HEK293 (cell line): ENCODE measurements at regions of chr12 and their contacts with region 1.

Region 1: GRCh38 chr12:108803428-108804105 is 53.8 kb downstream of the SSH1 start:
- H3K4me3 ChIP-seq: no peak overlapping the region
- H3K27ac ChIP-seq: no peak overlapping the region
- H3K4me1 ChIP-seq: no peaks in the 10 kb centered on the region
- CTCF ChIP-seq: peak; percentile 61

Region 2: DNA sequence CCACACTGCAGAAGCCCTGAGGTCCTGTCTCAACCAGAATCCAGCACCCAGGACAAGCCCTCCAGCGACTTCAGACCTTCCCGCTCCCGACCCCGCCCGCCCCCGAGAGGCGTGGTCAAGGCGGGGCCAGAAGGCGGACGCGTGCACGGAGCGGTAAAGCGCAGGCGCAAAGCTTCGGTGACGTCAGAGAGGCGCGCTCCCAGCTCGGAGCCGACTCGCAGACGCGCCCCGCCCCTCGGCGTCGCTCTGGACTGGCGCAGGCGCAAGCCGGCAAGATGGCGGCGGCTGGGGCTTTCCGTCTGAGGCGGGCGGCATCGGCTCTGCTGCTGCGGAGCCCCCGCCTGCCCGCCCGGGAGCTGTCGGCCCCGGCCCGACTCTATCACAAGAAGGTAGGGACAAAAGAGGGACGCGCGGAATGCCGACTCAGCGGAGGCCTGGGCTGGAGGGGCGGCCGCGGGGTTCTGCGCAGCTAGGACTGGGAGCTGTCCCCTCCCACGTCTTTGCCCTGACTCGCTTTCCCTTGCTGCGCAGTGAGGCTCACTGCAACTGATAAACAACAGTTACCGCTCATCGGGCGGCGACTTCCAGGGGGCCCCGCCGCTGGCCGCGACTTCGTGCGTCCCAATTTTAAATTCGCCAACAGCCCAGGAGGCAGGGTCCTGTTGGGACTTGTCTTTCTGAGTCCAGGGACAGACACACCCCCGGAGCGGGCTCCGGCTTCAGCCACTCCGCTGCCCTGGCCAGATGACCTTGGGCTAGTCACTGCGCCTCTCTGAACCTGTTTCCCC is 241.0 kb before region 1 on chr12 and contains the start of gene ISCU:
- CTCF ChIA-PET with region 1: interaction called, 20 read pairs
- POLR2A ChIA-PET with region 1: no interaction called
- H3K4me3 ChIP-seq: peak within 1 kb of the TSS; percentile 97
- H3K27ac ChIP-seq: peak within 1 kb of the TSS; percentile 77
- H3K4me1 ChIP-seq: 0 out of 2 replicates have a peak, but pooled peaks cover 2% of the 10 kb centered on the region
- CTCF ChIP-seq: no peak

Region 3: DNA sequence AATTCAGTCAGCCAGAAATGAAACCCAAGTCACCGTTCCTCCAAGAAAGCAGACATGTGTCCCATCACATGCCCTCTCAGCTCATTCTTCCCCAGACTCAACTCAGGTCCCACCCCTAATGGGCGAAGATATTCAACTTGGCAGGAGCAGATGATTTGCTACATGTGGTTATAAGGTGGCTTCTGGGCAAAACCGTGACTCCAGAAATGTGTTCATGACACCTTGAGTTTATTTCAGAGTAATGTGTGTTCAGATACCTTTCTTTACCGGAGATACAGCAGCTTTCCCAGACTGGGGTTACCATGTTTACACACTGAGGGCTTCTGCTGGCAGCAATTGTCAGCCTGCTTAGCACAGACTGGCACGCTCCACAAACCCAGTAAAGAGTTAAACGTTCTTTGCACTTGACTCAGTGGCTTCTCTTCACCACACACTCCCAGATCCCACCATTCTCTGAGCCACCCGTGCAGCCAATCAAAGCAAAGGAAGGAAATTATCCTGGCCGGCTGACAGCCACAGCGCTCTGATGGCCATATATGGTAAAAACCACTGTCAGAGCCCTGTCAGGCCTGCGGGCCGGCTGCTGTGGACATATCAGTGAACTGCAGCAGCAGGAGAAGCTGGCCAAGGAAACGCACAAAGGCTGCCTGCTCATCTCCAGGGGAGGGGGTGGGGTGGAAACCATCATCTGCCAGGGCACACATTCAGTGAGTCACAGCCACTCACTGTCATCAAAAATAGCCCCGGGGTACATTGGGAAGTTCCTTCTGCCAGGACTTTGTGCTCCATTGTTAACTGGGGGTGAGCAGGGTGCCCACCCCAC is 112.2 kb before region 1 on chr12:
- CTCF ChIA-PET with region 1: no interaction called
- POLR2A ChIA-PET with region 1: no interaction called
- H3K4me3 ChIP-seq: peak overlapping the region; percentile 12; the same call in 1 of the 2 replicates
- H3K27ac ChIP-seq: peak overlapping the region; percentile 78
- H3K4me1 ChIP-seq: peaks cover 30% of the 10 kb centered on the region
- CTCF ChIP-seq: peak; percentile 50; the same call in 1 of the 2 replicates

Region 4: GRCh38 chr12:108821407-108822397 is 18.1 kb after region 1 on chr12:
- CTCF ChIA-PET with region 1: interaction called, 11 read pairs
- POLR2A ChIA-PET with region 1: no interaction called
- H3K4me3 ChIP-seq: no peak overlapping the region
- H3K27ac ChIP-seq: no peak overlapping the region
- H3K4me1 ChIP-seq: peaks cover 18% of the 10 kb centered on the region
- CTCF ChIP-seq: no peak

Region 5: DNA sequence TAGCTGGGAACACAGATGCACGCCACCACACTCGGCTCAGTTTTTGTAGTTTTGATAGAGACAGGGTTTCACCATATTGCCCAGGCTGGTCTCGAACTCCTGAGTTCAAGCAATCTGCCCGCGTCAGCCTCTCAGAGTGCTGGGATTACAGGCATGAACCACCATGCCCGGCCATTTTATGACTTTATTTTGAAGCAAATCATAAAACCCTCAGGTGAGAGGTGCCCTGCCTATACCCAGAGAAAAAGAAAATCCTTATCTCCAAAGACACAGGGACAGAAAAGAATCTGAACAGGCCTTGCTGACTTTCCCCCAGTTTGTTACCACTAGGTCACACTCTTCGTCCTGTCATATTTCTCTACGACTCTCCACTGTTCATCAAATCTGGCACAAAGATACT is 125.1 kb after region 1 on chr12:
- CTCF ChIA-PET with region 1: no interaction called
- POLR2A ChIA-PET with region 1: no interaction called
- H3K4me3 ChIP-seq: no peak overlapping the region
- H3K27ac ChIP-seq: no peak overlapping the region
- H3K4me1 ChIP-seq: no peaks in the 10 kb centered on the region
- CTCF ChIP-seq: no peak

Region 6: GRCh38 chr12:109010259-109010658 is 206.7 kb after region 1 on chr12:
- CTCF ChIA-PET with region 1: no interaction called
- POLR2A ChIA-PET with region 1: no interaction called
- H3K4me3 ChIP-seq: no peak overlapping the region
- H3K27ac ChIP-seq: no peak overlapping the region
- H3K4me1 ChIP-seq: no peaks in the 10 kb centered on the region
- CTCF ChIP-seq: no peak

Region 7: GRCh38 chr12:109033234-109034196 is 229.9 kb after region 1 on chr12:
- CTCF ChIA-PET with region 1: no interaction called
- POLR2A ChIA-PET with region 1: no interaction called
- H3K4me3 ChIP-seq: no peak overlapping the region
- H3K27ac ChIP-seq: no peak overlapping the region
- H3K4me1 ChIP-seq: no peaks in the 10 kb centered on the region
- CTCF ChIP-seq: no peak

Region 8: GRCh38 chr12:109093022-109093918 is 289.7 kb after region 1 on chr12 and contains the start of gene ALKBH2:
- CTCF ChIA-PET with region 1: interaction called, 4 read pairs
- POLR2A ChIA-PET with region 1: interaction called, 15 read pairs
- H3K4me3 ChIP-seq: peak within 1 kb of the TSS; percentile 32
- H3K27ac ChIP-seq: no peak within 1 kb of the TSS; the same call in 1 of the 2 replicates
- H3K4me1 ChIP-seq: no peaks in the 10 kb centered on the region
- CTCF ChIP-seq: peak; percentile 99